Psoas muscle (tissue), 8 donors: ENCODE measurements at regions of chr1 and their contacts with region 1.

Region 1: DNA sequence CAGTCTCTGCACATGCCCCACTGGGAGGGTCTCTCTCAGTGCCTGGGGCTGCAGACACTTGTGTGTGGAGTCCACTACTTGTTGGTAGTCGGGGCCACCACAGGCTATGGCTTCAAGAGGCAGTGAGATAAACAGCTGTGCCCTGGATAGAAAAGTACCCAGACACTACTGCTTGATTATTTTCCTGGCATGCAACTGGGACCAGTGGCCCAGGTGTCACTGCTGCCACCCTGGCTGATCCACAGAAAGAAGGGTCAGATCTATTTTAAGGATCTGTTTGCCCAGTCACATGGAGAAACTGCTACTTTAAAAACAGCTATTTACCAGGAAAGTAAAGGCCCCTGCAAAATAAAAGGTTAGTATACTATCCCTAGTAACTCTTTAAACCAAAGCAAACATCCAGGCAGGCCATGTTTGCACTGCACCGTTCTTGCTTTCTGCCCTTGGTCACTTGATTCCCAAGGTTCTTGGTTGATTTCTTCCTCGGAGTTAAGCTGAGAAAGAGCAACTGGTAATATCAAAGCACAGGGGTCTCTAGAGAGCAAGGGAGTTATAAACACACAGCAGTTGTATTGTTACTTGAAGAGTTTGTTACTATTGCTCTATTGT is 99.9 kb downstream of the GLUL start:
- DNase-seq: peak in 1 of 2 donors; percentile 63
- ATAC-seq: peak in 3 of 4 donors; percentile 51 to 81 (median 61)
- H3K4me3 ChIP-seq: no peak overlapping the region
- H3K27ac ChIP-seq: peak overlapping the region; percentile 79
- H3K4me1 ChIP-seq: peaks cover 40% of the 10 kb centered on the region
- H3K27me3 ChIP-seq: no peaks in the 10 kb centered on the region
- CTCF ChIP-seq: no peak

Region 2: DNA sequence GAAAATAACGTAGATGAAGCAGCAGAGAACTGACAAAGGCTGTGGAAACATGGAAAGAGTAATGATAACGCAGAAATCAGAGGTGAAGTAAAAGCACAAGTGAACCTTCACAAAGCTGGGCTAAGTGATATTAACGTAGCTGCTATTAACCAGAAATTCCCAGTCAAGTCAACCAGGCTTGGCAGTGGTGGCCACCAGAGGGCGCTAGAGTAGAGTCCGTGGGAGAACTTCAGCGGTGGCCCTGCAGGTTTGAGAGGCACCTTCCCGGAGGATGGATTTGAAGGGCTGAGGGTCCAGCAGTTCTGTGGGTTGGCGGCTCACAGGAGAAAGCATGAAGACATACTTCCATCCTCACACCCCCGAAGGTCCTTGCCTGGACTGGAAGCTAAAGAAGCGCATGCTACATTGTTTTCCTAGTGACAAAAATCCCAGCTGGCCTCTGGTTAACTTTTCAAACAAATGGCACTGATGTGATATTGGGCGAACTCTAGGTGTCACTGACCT is 148.5 kb before region 1 on chr1:
- intact Hi-C with region 1: loop called (anchors 5 kb)
- DNase-seq: peak; percentile 94 to 96
- ATAC-seq: peak; percentile 72 to 86 (median 82)
- H3K4me3 ChIP-seq: no peak overlapping the region
- H3K27ac ChIP-seq: peak overlapping the region; percentile 87
- H3K4me1 ChIP-seq: peaks cover 32% of the 10 kb centered on the region
- H3K27me3 ChIP-seq: no peaks in the 10 kb centered on the region
- CTCF ChIP-seq: peak; percentile 97

Region 3: GRCh38 chr1:182149411-182149965 is 142.2 kb before region 1 on chr1:
- intact Hi-C with region 1: loop called (anchors 5 kb)
- DNase-seq: peak in 1 of 2 donors; percentile 34
- ATAC-seq: peak; percentile 40 to 57 (median 54)
- H3K4me3 ChIP-seq: no peak overlapping the region
- H3K27ac ChIP-seq: no peak overlapping the region
- H3K4me1 ChIP-seq: peaks cover 16% of the 10 kb centered on the region
- H3K27me3 ChIP-seq: no peaks in the 10 kb centered on the region
- CTCF ChIP-seq: no peak

Region 4: GRCh38 chr1:182348961-182349747 is 57.5 kb after region 1 on chr1:
- intact Hi-C with region 1: loop called (anchors 2 kb)
- DNase-seq: peak; percentile 74 to 89
- ATAC-seq: peak; percentile 79 to 88 (median 84)
- H3K4me3 ChIP-seq: no peak overlapping the region
- H3K27ac ChIP-seq: peak overlapping the region; percentile 87
- H3K4me1 ChIP-seq: peaks cover 25% of the 10 kb centered on the region
- H3K27me3 ChIP-seq: no peaks in the 10 kb centered on the region
- CTCF ChIP-seq: no peak

Region 5: GRCh38 chr1:182391362-182392044 is 99.8 kb after region 1 on chr1 and contains the start of gene GLUL:
- intact Hi-C with region 1: loop called in 1 of 2 experiments (anchors 5 kb)
- DNase-seq: peak; percentile 96 to 97
- ATAC-seq: peak; percentile 84 to 93 (median 87)
- H3K4me3 ChIP-seq: peak within 1 kb of the TSS; percentile 96
- H3K27ac ChIP-seq: peak within 1 kb of the TSS; percentile 98
- H3K4me1 ChIP-seq: peaks cover 40% of the 10 kb centered on the region
- H3K27me3 ChIP-seq: no peaks in the 10 kb centered on the region
- CTCF ChIP-seq: peak; percentile 26
- total RNA-seq, gene GLUL: 1,167 to 6,689 (median 3,344) TPM